Common myeloid progenitor, CD34-positive (primary cell): ENCODE measurements at regions of chr14 and their contacts with region 1.

Region 1: DNA sequence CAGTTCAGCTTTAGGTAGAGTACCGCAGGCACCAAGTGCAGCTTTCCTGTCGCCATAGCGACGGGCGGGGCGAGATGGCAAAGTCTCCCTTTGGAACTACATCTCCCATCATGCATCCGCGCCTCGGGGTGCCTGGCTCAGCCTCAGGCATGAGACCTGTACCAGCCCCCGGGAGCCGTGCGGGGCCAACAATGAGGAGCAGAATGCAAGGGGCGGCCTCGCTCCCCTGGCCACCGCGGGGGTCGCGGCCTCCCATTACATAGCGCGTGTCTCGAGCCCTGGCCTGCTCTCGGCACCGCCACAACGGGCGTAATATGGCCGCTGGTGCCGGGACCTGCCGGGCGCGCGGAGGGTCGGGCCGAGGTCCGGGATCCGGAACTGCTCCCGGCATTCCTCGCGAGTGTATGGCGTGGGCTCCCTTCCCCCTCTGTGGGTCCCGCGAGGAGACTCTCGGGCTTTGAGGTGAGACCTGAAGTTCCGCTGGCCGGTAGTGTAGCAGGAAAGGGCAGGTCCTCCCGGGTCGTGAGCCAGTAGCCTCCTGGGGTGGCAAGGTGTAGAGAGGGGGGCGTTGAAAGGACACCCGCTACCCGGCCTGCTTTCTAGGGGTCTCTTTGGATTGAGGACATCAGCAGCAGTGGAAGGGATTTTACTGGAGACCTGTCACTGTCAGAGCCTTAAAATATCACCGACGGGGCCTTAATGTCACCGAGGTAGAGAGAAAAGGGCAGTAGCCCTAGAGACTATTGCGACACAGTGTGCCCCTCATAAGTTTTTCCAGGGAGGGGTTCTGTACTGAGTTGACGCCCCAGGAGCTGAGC is at the start of gene THTPA:
- DNase-seq: peak; percentile 89 to 94 (median 92)
- H3K4me3 ChIP-seq: peak within 1 kb of the TSS; percentile 72 to 94 (median 87)
- H3K27ac ChIP-seq: peak within 1 kb of the TSS; percentile 54 to 85
- H3K4me1 ChIP-seq: peaks cover 0 to 30% (median 22%) of the 10 kb centered on the region in 4 experiments
- H3K27me3 ChIP-seq: no peaks in the 10 kb centered on the region

Region 2: GRCh38 chr14:23478111-23478759 is 77.9 kb before region 1 on chr14:
- CTCF ChIA-PET with region 1: interaction called, 519 read pairs
- POLR2A ChIA-PET with region 1: interaction called, 4 read pairs
- DNase-seq: peak; percentile 84 to 93 (median 89)
- H3K4me3 ChIP-seq: no peak overlapping the region
- H3K27ac ChIP-seq: no peak overlapping the region
- H3K4me1 ChIP-seq: no peaks in the 10 kb centered on the region
- H3K27me3 ChIP-seq: no peaks in the 10 kb centered on the region

Region 3: GRCh38 chr14:23494223-23494622 is 61.9 kb before region 1 on chr14:
- CTCF ChIA-PET with region 1: interaction called, 519 read pairs
- POLR2A ChIA-PET with region 1: interaction called, 4 read pairs
- DNase-seq: no peak
- H3K4me3 ChIP-seq: no peak overlapping the region
- H3K27ac ChIP-seq: no peak overlapping the region
- H3K4me1 ChIP-seq: no peaks in the 10 kb centered on the region
- H3K27me3 ChIP-seq: no peaks in the 10 kb centered on the region

Region 4: DNA sequence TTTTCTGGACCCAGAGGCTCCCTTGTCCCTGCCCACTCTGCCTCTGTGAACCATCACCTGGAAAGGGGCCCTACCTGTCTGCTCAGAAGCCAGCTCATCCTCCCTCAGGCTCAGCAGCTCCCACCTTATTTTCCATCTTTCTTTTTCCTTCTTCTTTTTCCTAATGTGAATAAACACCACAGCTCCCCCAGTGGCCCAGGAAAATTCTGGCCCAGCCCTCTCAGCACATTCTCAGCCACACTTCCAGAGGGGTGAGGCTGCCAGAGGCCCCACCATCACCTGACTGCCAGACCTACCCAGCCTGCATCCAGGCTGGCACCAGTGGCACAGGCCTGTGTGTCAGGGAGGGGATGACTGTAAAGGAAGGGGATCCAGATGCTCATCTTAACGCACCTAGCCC is 27.5 kb before region 1 on chr14:
- CTCF ChIA-PET with region 1: interaction called, 65 read pairs
- POLR2A ChIA-PET with region 1: no interaction called
- DNase-seq: no peak
- H3K4me3 ChIP-seq: no peak overlapping the region
- H3K27ac ChIP-seq: no peak overlapping the region
- H3K4me1 ChIP-seq: peaks cover 0 to 19% (median 14%) of the 10 kb centered on the region in 4 experiments
- H3K27me3 ChIP-seq: no peaks in the 10 kb centered on the region

Region 5: GRCh38 chr14:23539248-23540140 is 16.6 kb before region 1 on chr14:
- CTCF ChIA-PET with region 1: interaction called, 97 read pairs
- POLR2A ChIA-PET with region 1: interaction called, 3 read pairs
- DNase-seq: peak; percentile 36 to 51 (median 39)
- H3K4me3 ChIP-seq: no peak overlapping the region
- H3K27ac ChIP-seq: no peak overlapping the region
- H3K4me1 ChIP-seq: peaks cover 0 to 4% (median 0%) of the 10 kb centered on the region in 4 experiments
- H3K27me3 ChIP-seq: no peaks in the 10 kb centered on the region

Region 6: GRCh38 chr14:23567192-23568020 is 11.3 kb after region 1 on chr14 and contains the start of gene AP1G2:
- CTCF ChIA-PET with region 1: interaction called, 63 read pairs
- POLR2A ChIA-PET with region 1: no interaction called
- DNase-seq: peak; percentile 81 to 86 (median 84)
- H3K4me3 ChIP-seq: peak within 1 kb of the TSS; percentile 76 to 94 (median 85)
- H3K27ac ChIP-seq: peak within 1 kb of the TSS; percentile 64 to 75
- H3K4me1 ChIP-seq: peaks cover 4 to 51% (median 45%) of the 10 kb centered on the region in 4 experiments
- H3K27me3 ChIP-seq: no peaks in the 10 kb centered on the region